Naive thymus-derived CD4-positive, alpha-beta T cell (primary cell): ENCODE measurements at regions of chr19 and their contacts with region 1.

Region 1: DNA sequence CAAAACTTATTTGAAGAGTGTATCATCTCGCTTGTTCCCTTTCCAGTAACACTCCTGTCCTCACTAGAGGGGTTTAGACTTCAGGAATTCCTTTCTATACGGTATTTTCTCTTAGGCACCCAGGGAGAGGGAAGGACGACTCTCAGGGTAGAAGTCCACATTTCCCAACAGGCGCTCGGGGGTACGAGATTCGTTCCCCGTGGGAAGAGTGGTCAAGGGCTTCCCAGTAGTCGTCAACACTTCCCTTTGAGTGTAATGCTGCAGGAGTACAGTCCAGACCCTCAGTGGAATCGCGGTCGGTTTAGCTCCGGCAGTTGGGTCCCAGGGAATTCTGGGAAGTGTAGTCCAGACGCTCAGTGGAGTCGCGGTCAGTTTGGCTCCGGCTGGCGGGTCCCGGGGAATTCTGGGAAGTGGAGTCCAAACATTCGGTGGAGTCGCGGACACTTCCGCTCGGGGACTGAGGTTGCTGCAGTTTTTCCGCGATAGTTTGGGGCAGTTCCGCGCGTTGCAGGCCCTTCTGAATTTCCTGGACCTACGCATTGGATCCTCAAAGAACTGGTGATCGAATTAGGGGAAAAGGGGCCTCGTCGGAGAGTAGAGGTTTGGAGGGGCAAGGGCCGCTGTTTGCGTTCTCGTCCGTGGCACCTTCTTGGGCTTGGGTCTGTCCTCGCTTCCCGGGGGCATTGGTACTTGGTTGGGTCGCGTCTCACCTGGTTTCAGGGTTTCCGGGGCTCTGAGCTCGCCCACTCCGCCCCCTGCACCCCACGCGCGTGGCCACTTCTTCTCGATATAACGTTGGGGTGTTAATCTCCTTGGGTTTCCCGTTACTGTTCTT is at the start of gene ZNF224:
- DNase-seq: peak; percentile 43 to 79 (median 71)
- ATAC-seq: peak; percentile 94
- H3K4me3 ChIP-seq: peak within 1 kb of the TSS; percentile 84
- H3K4me3 Mint-ChIP-seq: peak within 1 kb of the TSS; percentile 82 to 99 (median 91)
- H3K27ac ChIP-seq: peak within 1 kb of the TSS; percentile 72
- H3K27ac Mint-ChIP-seq: peak within 1 kb of the TSS; percentile 58 to 96 (median 87)
- H3K4me1 ChIP-seq: peaks cover 10 to 13% of the 10 kb centered on the region in 2 donors
- H3K4me1 Mint-ChIP-seq: peaks cover 16 to 33% (median 25%) of the 10 kb centered on the region in 7 donors
- H3K27me3 ChIP-seq: no peaks in the 10 kb centered on the region
- H3K27me3 Mint-ChIP-seq: no peaks in the 10 kb centered on the region
- total RNA-seq, gene ZNF224: 35.0 to 82.0 (median 44.2) TPM

Region 2: GRCh38 chr19:43754503-43755255 is 339.5 kb before region 1 on chr19 and contains the start of gene SMG9:
- CTCF ChIA-PET with region 1: no interaction called
- POLR2A ChIA-PET with region 1: no interaction called
- intact Hi-C with region 1: loop called in 1 of 2 experiments (anchors 10 kb)
- DNase-seq: peak; percentile 98 to 100 (median 99)
- ATAC-seq: peak; percentile 92
- H3K4me3 ChIP-seq: peak within 1 kb of the TSS; percentile 95
- H3K4me3 Mint-ChIP-seq: peak within 1 kb of the TSS; percentile 94 to 99 (median 97)
- H3K27ac ChIP-seq: peak within 1 kb of the TSS; percentile 85
- H3K27ac Mint-ChIP-seq: peak within 1 kb of the TSS; percentile 96 to 100 (median 98)
- H3K4me1 ChIP-seq: peaks cover 20 to 27% of the 10 kb centered on the region in 2 donors
- H3K4me1 Mint-ChIP-seq: peaks cover 5 to 62% (median 45%) of the 10 kb centered on the region in 7 donors
- H3K27me3 ChIP-seq: no peaks in the 10 kb centered on the region
- H3K27me3 Mint-ChIP-seq: peaks cover 0 to 6% (median 0%) of the 10 kb centered on the region in 5 donors
- total RNA-seq, gene SMG9: 48.5 to 75.9 (median 53.9) TPM

Region 3: DNA sequence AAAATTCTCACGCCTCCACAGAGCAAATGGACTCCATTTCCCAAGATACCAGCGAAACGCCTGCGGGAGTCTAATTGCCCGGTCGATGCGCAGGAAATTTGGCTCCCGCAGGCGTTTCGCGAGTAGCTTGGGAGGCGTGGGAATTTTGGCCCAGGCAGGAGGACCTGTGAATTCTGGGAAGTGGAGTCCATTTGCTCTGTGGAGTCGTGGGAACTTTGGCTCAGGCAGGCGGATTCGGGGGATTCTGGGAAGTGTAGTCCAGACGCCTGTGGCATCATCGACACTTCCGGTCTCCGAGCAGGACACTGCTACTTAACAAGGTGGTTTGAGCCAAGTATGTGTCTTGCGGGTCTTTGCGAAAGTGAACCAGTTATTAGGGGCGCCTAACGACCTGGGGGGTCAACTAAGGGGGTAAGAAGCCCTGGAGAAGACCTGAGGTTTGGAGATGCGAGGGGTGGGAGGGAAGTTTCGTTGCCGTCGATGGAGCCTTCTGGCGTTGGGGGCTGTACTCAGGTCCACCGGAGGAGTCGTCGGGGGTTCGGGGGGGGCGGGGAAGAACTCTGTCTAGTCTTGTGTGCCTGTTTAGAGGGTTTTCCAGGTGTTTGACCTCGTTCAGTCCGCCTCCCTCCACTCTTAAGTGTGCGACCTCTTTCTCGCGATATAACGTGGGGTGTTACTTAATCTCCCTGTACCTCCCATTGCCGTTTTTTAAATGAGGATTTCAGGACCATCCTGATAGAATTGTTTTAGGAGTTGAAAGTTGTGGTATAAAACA is 110.0 kb before region 1 on chr19 and contains the start of gene ZNF155:
- CTCF ChIA-PET with region 1: no interaction called
- POLR2A ChIA-PET with region 1: interaction called, 7 read pairs
- intact Hi-C with region 1: loop called (anchors 2 kb)
- DNase-seq: peak; percentile 46 to 72 (median 64)
- ATAC-seq: peak; percentile 92
- H3K4me3 ChIP-seq: peak within 1 kb of the TSS; percentile 96
- H3K4me3 Mint-ChIP-seq: peak within 1 kb of the TSS; percentile 89 to 99 (median 96)
- H3K27ac ChIP-seq: peak within 1 kb of the TSS; percentile 79
- H3K27ac Mint-ChIP-seq: peak within 1 kb of the TSS; percentile 72 to 97 (median 93)
- H3K4me1 ChIP-seq: peaks cover 0 to 3% of the 10 kb centered on the region in 2 donors
- H3K4me1 Mint-ChIP-seq: peaks cover 0 to 28% (median 14%) of the 10 kb centered on the region in 7 donors
- H3K27me3 ChIP-seq: no peaks in the 10 kb centered on the region
- H3K27me3 Mint-ChIP-seq: no peaks in the 10 kb centered on the region
- total RNA-seq, gene ZNF155: 5.2 to 13.3 (median 9.1) TPM

Region 4: GRCh38 chr19:44051654-44052402 is 42.3 kb before region 1 on chr19 and contains the start of gene ZNF223:
- CTCF ChIA-PET with region 1: no interaction called
- POLR2A ChIA-PET with region 1: no interaction called
- intact Hi-C with region 1: loop called in 1 of 2 experiments (anchors 1 kb)
- DNase-seq: peak in 8 of 9 donors; percentile 14 to 52 (median 40)
- ATAC-seq: peak; percentile 85
- H3K4me3 ChIP-seq: peak within 1 kb of the TSS; percentile 58
- H3K4me3 Mint-ChIP-seq: peak within 1 kb of the TSS; percentile 71 to 98 (median 96)
- H3K27ac ChIP-seq: peak within 1 kb of the TSS; percentile 53
- H3K27ac Mint-ChIP-seq: peak within 1 kb of the TSS in 8 of 9 donors; percentile 36 to 91 (median 82)
- H3K4me1 ChIP-seq: no peaks in the 10 kb centered on the region
- H3K4me1 Mint-ChIP-seq: peaks cover 7 to 36% (median 28%) of the 10 kb centered on the region in 7 donors
- H3K27me3 ChIP-seq: no peaks in the 10 kb centered on the region
- H3K27me3 Mint-ChIP-seq: peaks cover 0 to 22% (median 13%) of the 10 kb centered on the region in 5 donors
- total RNA-seq, gene ZNF223: 0.15 to 8.7 (median 2.3) TPM

Region 5: GRCh38 chr19:44141191-44142058 is 47.3 kb after region 1 on chr19 and contains the start of gene ZNF234:
- CTCF ChIA-PET with region 1: interaction called, 3 read pairs
- POLR2A ChIA-PET with region 1: interaction called, 3 read pairs
- intact Hi-C with region 1: loop called (anchors 1 kb)
- DNase-seq: peak; percentile 29 to 69 (median 56)
- ATAC-seq: peak; percentile 92
- H3K4me3 ChIP-seq: peak within 1 kb of the TSS; percentile 80
- H3K4me3 Mint-ChIP-seq: peak within 1 kb of the TSS; percentile 90 to 97 (median 96)
- H3K27ac ChIP-seq: peak within 1 kb of the TSS; percentile 77
- H3K27ac Mint-ChIP-seq: peak within 1 kb of the TSS; percentile 64 to 94 (median 88)
- H3K4me1 ChIP-seq: peaks cover 0 to 12% of the 10 kb centered on the region in 2 donors
- H3K4me1 Mint-ChIP-seq: peaks cover 14 to 30% (median 25%) of the 10 kb centered on the region in 7 donors
- H3K27me3 ChIP-seq: no peaks in the 10 kb centered on the region
- H3K27me3 Mint-ChIP-seq: no peaks in the 10 kb centered on the region
- total RNA-seq, gene ZNF234: 2.8 to 25.2 (median 13.4) TPM

Region 6: GRCh38 chr19:44212250-44212865 is 118.2 kb after region 1 on chr19 and contains the start of gene ZNF227:
- CTCF ChIA-PET with region 1: no interaction called
- POLR2A ChIA-PET with region 1: interaction called, 3 read pairs
- intact Hi-C with region 1: loop called (anchors 1 kb)
- DNase-seq: peak; percentile 47 to 80 (median 75)
- ATAC-seq: peak; percentile 98
- H3K4me3 ChIP-seq: peak within 1 kb of the TSS; percentile 98
- H3K4me3 Mint-ChIP-seq: peak within 1 kb of the TSS; percentile 85 to 100 (median 96)
- H3K27ac ChIP-seq: peak within 1 kb of the TSS; percentile 81
- H3K27ac Mint-ChIP-seq: peak within 1 kb of the TSS; percentile 82 to 97 (median 92)
- H3K4me1 ChIP-seq: peaks cover 0 to 15% of the 10 kb centered on the region in 2 donors
- H3K4me1 Mint-ChIP-seq: peaks cover 19 to 45% (median 31%) of the 10 kb centered on the region in 7 donors
- H3K27me3 ChIP-seq: no peaks in the 10 kb centered on the region
- H3K27me3 Mint-ChIP-seq: peaks cover 0 to 4% (median 0%) of the 10 kb centered on the region in 5 donors
- total RNA-seq, gene ZNF227: 18.3 to 51.5 (median 30.0) TPM